Activated CD8-positive, alpha-beta memory T cell treated with anti-CD3 and anti-CD28 coated beads, Interleukin-2, amount 10 ng/mL, durations not matched to agents 7 days and 5 days (primary cell): ENCODE measurements at regions of chr3 and their contacts with region 1.

Region 1: GRCh38 chr3:196609343-196609775 is 30.1 kb upstream of the NRROS start:
- DNase-seq: peak; percentile 97
- ATAC-seq: peak; percentile 93
- H3K4me3 Mint-ChIP-seq: peak overlapping the region; percentile 51
- H3K27ac Mint-ChIP-seq: peak overlapping the region; percentile 87
- H3K4me1 Mint-ChIP-seq: peaks cover 45% of the 10 kb centered on the region
- H3K27me3 Mint-ChIP-seq: no peaks in the 10 kb centered on the region

Region 2: GRCh38 chr3:196621611-196622010 is 12.3 kb after region 1 on chr3:
- CTCF ChIA-PET with region 1: interaction called, 16 read pairs
- DNase-seq: no peak
- ATAC-seq: no peak
- H3K4me3 Mint-ChIP-seq: no peak overlapping the region
- H3K27ac Mint-ChIP-seq: no peak overlapping the region
- H3K4me1 Mint-ChIP-seq: peaks cover 45% of the 10 kb centered on the region
- H3K27me3 Mint-ChIP-seq: peaks cover 7% of the 10 kb centered on the region

Region 3: DNA sequence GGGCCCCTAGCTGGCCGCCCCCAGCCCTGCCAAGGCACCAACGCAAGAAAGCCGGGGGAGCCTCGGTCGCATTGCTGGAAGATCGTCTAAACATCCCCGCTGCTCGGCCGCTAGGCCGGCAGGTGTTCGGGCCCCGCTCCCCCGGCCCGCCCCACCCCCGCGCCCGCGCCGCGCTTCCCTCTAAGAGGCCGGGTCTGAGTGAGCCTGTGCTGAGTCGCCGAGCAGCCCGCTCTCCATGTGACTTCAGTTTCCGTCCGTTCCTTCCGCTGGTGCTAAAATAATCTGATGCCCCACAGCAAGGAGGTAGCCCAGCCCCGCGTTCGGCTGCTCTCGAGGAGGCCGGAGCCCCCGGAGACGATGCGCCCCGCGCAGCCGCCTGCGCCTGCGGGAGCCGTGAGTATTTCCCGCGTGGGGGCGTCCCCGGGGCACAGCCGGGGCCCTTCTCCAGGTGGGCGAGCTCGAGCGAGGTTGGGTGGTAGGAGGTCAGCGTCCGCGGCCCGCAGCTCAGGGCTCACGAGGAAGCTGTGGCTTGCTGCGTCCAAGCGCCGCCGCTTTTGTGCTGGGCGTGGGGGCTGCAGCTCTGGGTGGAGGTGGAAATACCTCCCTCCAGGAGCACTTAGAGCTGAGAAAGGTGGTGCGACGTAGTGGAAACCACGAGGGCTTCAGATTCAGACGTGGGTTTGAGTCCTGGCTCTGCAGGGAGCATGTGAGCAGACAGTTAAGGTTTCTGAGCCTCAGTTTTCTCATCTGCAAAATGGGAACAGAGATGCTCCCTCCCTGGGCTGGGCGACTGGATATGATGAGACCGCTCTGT is 30.3 kb after region 1 on chr3 and contains the start of gene NRROS:
- CTCF ChIA-PET with region 1: interaction called, 113 read pairs
- DNase-seq: peak; percentile 85
- ATAC-seq: peak; percentile 87
- H3K4me3 Mint-ChIP-seq: peak within 1 kb of the TSS; percentile 89
- H3K27ac Mint-ChIP-seq: peak within 1 kb of the TSS; percentile 84
- H3K4me1 Mint-ChIP-seq: peaks cover 66% of the 10 kb centered on the region
- H3K27me3 Mint-ChIP-seq: no peaks in the 10 kb centered on the region
- total RNA-seq, gene NRROS: 37.5 to 47.8 TPM

Region 4: DNA sequence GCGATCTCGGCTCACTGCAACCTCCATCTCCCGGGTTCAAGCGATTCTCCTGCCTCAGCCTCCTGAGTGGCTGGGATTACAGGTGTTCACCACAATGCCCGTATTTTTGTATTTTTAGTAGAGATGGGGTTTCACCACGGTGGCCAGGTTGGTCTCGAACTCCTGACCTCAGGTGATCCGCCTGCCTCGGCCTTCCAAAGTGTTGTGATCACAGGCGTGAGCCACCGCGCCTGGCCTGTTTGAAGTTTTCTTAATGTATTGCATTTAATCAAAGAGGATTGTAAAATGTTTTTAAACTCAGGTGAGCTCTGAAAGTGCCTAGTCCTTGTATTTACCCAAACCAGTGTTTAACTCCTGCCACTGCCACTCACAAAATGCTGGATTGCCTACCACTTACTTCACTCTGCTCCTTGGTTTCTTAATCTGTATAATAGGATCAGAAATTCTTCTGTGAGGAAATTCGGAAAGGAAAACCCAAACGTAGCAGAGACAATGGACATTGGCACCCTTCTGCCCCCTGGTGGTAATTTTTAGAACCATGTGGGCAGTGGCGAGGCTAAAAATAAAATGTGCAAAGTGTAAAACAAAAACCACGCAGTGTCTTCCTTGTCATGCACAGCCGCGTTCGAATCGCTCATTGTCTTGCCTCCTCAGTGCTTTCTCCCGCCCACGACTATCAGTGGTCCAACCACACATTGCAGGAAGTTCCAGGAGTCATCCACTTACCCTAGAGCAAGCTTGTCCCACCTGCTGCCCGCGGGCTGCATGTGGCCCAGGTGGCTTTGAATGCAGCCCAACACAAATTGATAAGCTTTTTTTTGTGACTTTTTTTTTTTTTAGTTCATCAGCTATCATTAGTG is 75.4 kb after region 1 on chr3:
- CTCF ChIA-PET with region 1: interaction called, 219 read pairs
- DNase-seq: peak; percentile 83
- ATAC-seq: peak; percentile 87
- H3K4me3 Mint-ChIP-seq: peak overlapping the region; percentile 46
- H3K27ac Mint-ChIP-seq: peak overlapping the region; percentile 50
- H3K4me1 Mint-ChIP-seq: peaks cover 21% of the 10 kb centered on the region
- H3K27me3 Mint-ChIP-seq: no peaks in the 10 kb centered on the region

Region 5: GRCh38 chr3:196711838-196712513 is 102.6 kb after region 1 on chr3 and contains the starts of genes CEP19 and PIGX:
- CTCF ChIA-PET with region 1: interaction called, 11 read pairs
- DNase-seq: peak; percentile 94
- ATAC-seq: peak; percentile 85
- H3K4me3 Mint-ChIP-seq: peak within 1 kb of the TSS; percentile 90
- H3K27ac Mint-ChIP-seq: peak within 1 kb of the TSS; percentile 92
- H3K4me1 Mint-ChIP-seq: peaks cover 41% of the 10 kb centered on the region
- H3K27me3 Mint-ChIP-seq: no peaks in the 10 kb centered on the region
- total RNA-seq, gene CEP19: 4.1 to 5.4 TPM
- total RNA-seq, gene PIGX: 40.5 to 56.9 TPM